ENCODE measurements at regions of chr6 and their contacts with region 1.

Region 1: DNA sequence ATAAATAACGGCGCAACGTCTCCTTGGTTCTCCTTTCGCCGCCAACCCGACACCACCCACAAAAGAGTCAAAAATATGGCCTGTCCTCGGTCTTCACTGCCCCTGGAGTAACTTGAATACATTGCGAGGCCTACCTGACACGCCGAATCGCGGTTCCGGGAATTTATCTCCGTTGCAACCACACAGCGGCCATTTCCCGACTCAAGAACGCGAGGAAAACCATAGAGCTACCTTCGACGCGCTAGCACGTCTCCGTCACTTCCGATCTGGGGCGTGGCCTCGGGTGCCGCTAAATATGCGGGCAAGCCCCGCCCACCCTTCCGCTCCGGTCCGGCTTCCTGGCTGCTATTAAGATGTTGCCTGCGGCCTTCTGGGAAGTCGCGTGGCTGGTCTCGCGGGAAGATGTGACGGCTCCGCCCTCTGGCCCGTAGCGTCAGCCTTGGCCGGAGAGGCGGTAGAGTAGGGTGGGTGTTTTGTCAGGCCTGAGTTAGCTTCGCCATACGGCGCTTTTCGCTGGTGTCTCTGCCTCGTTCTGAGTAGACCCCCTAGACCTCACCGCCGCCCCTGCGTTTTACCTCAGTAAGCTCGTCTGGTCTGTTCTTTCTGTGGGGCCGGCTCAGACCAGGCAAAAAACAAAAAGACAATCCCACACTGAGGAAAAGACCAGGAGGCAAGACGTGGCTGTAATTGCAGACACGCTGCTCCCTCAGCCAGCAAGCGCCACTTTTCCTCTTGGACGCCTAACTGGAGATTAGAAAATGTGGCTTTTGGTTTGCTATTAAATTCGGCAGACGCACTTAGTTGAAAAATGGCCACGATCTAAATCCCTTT is at the start of gene BCLAF1:
- DNase-seq: peak; percentile 98 to 99
- H3K4me3 ChIP-seq: peak within 1 kb of the TSS; percentile 85 to 100 (median 92)
- H3K27ac ChIP-seq: peak within 1 kb of the TSS; percentile 99
- H3K4me1 ChIP-seq: peaks cover 0 to 5% (median 2%) of the 10 kb centered on the region in 4 experiments; a peak in 4 of 7 replicates
- H3K27me3 ChIP-seq: no peaks in the 10 kb centered on the region
- CTCF ChIP-seq: no peak
- EP300 ChIP-seq: peak in 1 of 2 experiments; percentile 38; a peak in 1 of 3 replicates
- POLR2A ChIP-seq: peak; percentile 99 to 100
- RAD21 ChIP-seq: no peak
- total RNA-seq, gene BCLAF1: 230 and 231 TPM in 2 replicates

Region 2: DNA sequence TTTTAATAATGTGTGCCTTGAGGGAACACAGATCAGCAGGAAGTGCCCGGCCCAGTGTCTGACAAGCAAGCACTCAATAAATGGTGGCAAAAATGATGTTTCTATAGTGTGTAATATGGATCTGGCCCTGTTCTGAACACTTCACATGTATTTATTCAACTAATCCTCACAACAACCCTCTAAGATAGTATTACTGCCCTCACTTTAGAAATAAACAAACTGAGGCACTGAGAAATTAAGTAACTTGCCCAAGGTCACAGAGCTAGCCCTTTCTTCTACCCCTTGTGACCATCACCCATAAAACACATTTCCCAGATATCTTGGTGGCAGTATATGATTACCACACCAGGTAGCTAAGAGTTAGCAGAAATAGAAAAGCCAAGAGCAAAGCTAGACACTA is 26.9 kb before region 1 on chr6:
- CTCF ChIA-PET with region 1: interaction called, 4 read pairs
- POLR2A ChIA-PET with region 1: interaction called, 115 read pairs
- DNase-seq: no peak
- H3K4me3 ChIP-seq: no peak overlapping the region
- H3K27ac ChIP-seq: no peak overlapping the region
- H3K4me1 ChIP-seq: no peaks in the 10 kb centered on the region
- H3K27me3 ChIP-seq: no peaks in the 10 kb centered on the region
- CTCF ChIP-seq: no peak
- EP300 ChIP-seq: no peak
- POLR2A ChIP-seq: no peak
- RAD21 ChIP-seq: no peak

Region 3: DNA sequence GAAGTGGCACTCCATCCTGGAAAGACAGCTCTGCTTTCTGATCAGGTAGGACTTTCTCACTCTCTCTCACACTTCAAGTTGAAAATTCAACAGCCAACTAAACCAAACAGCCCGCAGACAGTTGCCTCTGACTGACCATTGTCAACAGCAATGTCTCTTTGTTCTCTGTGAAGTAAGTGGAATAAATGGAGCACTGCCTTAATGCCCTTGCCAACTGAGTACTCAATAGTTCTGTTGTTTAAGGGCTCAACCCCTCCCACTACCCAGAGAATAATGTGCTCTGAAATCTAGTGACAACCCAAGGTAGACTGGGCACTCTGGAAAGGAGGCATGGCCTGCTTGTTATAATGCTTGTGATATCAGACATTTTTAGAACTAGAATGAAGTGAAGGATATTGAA is 16.7 kb after region 1 on chr6:
- CTCF ChIA-PET with region 1: interaction called, 3 read pairs
- POLR2A ChIA-PET with region 1: interaction called, 17 read pairs
- DNase-seq: no peak
- H3K4me3 ChIP-seq: no peak overlapping the region
- H3K27ac ChIP-seq: no peak overlapping the region
- H3K4me1 ChIP-seq: no peaks in the 10 kb centered on the region
- H3K27me3 ChIP-seq: no peaks in the 10 kb centered on the region
- CTCF ChIP-seq: no peak
- EP300 ChIP-seq: no peak
- POLR2A ChIP-seq: no peak
- RAD21 ChIP-seq: no peak

Region 4: GRCh38 chr6:136334853-136335252 is 45.1 kb after region 1 on chr6:
- CTCF ChIA-PET with region 1: interaction called, 10 read pairs
- POLR2A ChIA-PET with region 1: interaction called, 12 read pairs
- DNase-seq: peak in 1 of 2 experiments; percentile 76
- H3K4me3 ChIP-seq: no peak overlapping the region
- H3K27ac ChIP-seq: no peak overlapping the region
- H3K4me1 ChIP-seq: no peaks in the 10 kb centered on the region; a peak in 1 of 7 replicates
- H3K27me3 ChIP-seq: no peaks in the 10 kb centered on the region; a peak in 1 of 7 replicates
- CTCF ChIP-seq: peak; percentile 48 to 77 (median 63)
- EP300 ChIP-seq: no peak
- POLR2A ChIP-seq: no peak
- RAD21 ChIP-seq: peak; percentile 37 to 43; a peak in 3 of 4 replicates

Region 5: GRCh38 chr6:136550330-136551071 is 260.7 kb after region 1 on chr6 and contains the start of gene MAP7:
- CTCF ChIA-PET with region 1: interaction called, 10 read pairs
- POLR2A ChIA-PET with region 1: interaction called, 21 read pairs
- DNase-seq: peak; percentile 81 to 94
- H3K4me3 ChIP-seq: peak within 1 kb of the TSS; percentile 68 to 99 (median 83)
- H3K27ac ChIP-seq: peak within 1 kb of the TSS; percentile 68; the same call in 1 of the 2 replicates
- H3K4me1 ChIP-seq: peaks cover 0 to 10% (median 1%) of the 10 kb centered on the region in 4 experiments; a peak in 5 of 7 replicates
- H3K27me3 ChIP-seq: peaks cover 0 to 14% (median 7%) of the 10 kb centered on the region in 4 experiments; a peak in 5 of 7 replicates
- CTCF ChIP-seq: peak; percentile 56 to 83 (median 74)
- EP300 ChIP-seq: peak in 1 of 2 experiments; percentile 87; a peak in 2 of 3 replicates
- POLR2A ChIP-seq: peak in 1 of 2 experiments; percentile 68; a peak in 2 of 3 replicates
- RAD21 ChIP-seq: peak; percentile 75 to 83
- total RNA-seq, gene MAP7: 66.9 and 67.0 TPM in 2 replicates